GM13977 (cell line): ENCODE measurements at regions of chr14 and their contacts with region 1.

Region 1: DNA sequence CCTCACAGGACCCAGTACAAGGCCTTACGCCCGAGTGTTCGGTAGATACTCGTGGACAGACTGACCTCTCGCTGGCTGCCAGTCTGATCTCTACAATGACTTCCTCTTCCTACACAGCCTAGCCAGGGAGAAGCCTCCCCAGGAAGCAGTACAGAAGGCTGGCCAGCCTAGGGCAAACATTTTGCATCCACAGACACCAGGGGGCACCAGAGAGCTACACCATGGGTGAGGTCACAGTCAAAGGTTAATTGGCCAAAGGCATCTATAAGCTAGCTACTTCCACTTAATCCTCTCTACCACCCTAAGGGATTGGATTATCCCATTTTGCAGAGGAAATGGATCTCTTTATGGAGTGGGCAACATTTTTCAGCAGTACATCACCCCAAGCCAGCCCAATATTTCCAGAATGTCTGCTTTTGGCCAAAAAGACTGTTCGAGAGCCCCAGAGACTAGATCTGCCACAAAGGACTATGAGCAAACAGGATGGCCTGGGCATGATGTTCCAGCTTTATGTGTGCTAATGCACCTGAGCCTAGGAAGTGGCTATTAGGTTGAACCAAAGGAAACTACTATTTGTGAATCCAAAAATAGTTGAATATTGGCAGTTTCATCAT is 14.6 kb upstream of the PNMA1 start:
- DNase-seq: peak; percentile 89
- CTCF ChIP-seq: peak; percentile 88

Region 2: DNA sequence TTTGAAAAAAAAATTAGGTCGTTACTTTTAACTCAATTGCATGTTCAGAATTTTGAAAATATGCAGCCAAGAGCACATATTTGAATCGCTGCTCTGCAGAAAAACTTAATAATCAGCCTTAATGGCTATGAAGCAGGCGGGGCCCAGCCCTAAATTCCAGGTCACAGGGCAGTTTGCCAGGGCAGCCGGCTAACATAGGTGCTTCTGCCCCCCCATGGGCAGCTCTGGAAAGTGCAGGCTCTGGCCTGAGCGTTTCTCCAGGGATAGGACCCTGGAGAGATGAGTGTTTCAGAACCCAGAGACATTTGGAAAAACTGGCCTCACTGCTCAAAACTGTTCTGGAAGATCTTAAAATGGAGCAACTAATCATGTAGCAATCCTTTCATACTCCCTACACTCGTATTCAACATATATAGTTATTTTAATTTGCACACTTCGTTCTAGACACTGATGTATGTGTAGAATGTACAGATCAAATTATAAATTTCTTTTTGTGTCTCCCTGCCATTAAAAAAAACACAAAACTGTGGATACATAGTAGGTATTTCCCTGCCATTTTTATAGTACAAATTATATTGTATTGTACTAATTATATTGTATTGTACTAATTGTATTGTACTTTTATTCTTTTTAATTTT is 96.8 kb after region 1 on chr14:
- in situ Hi-C with region 1: loop called (anchors 5 kb)
- DNase-seq: peak; percentile 78
- CTCF ChIP-seq: peak; percentile 92